ENCODE measurements at regions of chr7 and their contacts with region 1.

Region 1: DNA sequence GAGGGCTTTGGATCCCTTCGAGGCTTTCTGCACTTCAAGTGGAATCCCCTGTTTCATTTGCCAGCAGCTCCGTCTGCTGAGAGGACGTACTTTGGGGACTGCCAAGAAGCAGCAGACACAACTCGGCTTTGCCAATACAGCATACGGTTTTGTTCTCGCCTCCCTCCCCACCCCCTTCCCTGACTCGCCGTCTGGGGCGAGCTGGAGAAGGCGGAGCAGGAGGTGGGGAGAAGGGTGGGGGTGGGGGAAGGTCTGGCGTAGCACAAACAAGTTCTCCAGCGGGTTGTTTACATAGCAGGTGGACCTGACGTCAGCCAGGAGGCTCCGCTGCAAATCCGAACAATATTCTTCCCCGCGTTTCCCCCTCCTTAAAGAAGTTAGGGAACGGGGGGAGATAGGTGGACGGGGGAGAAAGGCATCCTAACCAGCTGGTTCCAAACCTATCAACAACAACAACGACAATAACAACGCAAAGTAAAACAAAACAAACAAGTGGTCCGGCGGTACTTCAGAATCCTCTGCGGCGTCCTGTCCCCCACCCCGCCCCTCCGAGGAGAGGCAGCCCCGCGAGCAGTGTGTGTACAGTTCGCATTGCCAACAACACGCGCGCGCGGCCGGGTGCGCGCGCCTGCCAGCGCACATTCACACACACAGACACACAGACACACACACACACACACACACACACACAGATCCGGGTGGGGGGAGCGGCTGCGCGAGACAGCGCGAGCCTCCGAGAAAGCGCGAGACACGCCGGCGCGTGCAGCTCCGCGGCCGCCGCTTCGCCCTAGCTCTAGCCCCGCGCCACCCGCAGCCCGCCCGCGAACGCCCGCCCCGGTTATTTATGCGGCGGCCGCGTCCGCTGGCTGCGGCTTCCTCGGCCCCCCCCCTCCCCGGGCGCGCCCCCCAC is 167.0 kb upstream of the PPP1R3A start:
- DNase-seq: peak; percentile 94

Region 2: DNA sequence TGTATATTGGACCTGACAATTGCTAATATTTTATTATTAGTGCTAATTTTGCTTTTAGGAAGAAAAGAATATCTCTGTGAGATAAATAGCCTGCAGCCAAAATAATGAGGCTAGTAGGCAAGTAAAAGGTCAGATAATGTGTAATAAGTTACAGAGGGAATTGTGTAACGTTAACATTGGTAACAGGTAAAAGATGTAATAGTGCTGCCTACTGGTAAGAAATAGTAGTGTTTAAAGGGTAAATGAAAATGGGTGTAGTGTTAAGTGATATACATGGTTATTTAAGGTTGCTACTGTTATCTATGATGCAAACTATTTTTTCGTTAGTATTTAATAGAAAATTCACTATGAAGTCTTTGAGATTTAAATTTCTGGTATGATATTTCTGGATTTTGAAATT is 319.6 kb after region 1 on chr7:
- in situ Hi-C with region 1: loop called (anchors 25 kb)
- DNase-seq: peak; percentile 57

Measured in KBM-7 (cell line).